Heart right ventricle (tissue), 16 donors: ENCODE measurements at regions of chr12 and their contacts with region 1.

Region 1: DNA sequence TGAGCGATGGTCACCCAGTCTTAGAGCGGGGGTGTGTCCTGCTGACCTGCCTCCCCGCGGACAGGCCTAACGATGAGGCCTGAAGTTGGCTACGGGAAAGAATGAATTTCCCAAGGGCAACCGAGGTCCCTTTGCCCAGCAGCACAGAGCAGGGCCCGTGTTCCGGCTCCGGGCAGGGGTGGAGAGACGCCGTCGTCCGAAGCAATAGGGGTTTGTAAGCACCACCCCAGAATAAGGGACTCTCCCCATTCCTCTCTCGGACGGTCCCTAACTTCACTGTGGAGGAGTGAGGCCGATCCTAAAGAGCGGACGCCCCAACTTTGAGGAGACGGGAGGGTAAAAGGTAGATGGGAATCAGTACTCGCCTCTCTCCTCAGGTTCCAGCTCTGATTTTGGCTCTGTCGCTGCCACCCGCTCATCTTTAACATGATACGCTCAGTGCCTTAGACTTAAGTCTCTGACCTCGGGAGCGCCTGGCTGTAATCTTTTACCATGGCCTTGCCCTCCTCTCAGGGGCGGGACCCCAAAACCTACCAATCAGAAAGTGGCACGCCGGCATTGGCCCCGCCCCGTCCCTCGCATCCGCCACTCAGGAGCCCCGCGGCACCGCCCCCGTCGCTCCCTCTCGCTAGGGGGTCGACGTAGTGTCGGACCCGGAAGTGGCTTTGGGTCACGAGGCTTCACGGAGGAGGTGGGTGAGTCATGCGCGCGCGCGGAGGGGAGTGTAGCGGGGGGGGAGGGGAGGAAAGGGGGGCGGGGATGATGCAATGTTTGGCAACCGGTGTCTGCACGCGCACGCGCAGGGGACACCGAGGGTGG is at the start of gene DDIT3:
- DNase-seq: peak; percentile 99
- ATAC-seq: peak; percentile 82 to 92 (median 90)
- H3K4me3 ChIP-seq: peak within 1 kb of the TSS; percentile 67 to 98 (median 88)
- H3K27ac ChIP-seq: peak within 1 kb of the TSS; percentile 89 to 100 (median 98)
- H3K4me1 ChIP-seq: peaks cover 25 to 80% (median 68%) of the 10 kb centered on the region in 9 donors
- H3K27me3 ChIP-seq: no peaks in the 10 kb centered on the region
- CTCF ChIP-seq: no peak
- total RNA-seq, gene DDIT3: 11.2 to 34.1 (median 22.0) TPM

Region 2: GRCh38 chr12:57280211-57281062 is 239.8 kb before region 1 on chr12:
- intact Hi-C with region 1: loop called in 1 of 10 experiments (anchors 5 kb)
- DNase-seq: no peak
- ATAC-seq: peak in 5 of 8 donors; percentile 34 to 63 (median 44)
- H3K4me3 ChIP-seq: no peak overlapping the region
- H3K27ac ChIP-seq: peak overlapping the region in 1 of 10 donors; percentile 67
- H3K4me1 ChIP-seq: peaks cover 0 to 14% (median 0%) of the 10 kb centered on the region in 9 donors
- H3K27me3 ChIP-seq: no peaks in the 10 kb centered on the region
- CTCF ChIP-seq: no peak

Region 3: GRCh38 chr12:57430112-57430930 is 89.9 kb before region 1 on chr12:
- intact Hi-C with region 1: no loop called
- DNase-seq: peak; percentile 48 to 55
- ATAC-seq: peak; percentile 64 to 86 (median 74)
- H3K4me3 ChIP-seq: peak overlapping the region; percentile 42 to 80 (median 66)
- H3K27ac ChIP-seq: peak overlapping the region; percentile 85 to 98 (median 94)
- H3K4me1 ChIP-seq: peaks cover 0 to 24% (median 15%) of the 10 kb centered on the region in 9 donors
- H3K27me3 ChIP-seq: no peaks in the 10 kb centered on the region
- CTCF ChIP-seq: peak in 5 of 9 donors; percentile 15 to 40 (median 34)

Region 4: GRCh38 chr12:57487597-57488401 is 32.5 kb before region 1 on chr12 and contains the start of gene MARS1:
- intact Hi-C with region 1: loop called in 2 of 10 experiments (anchors 1 to 2 kb)
- DNase-seq: peak; percentile 90 to 95
- ATAC-seq: peak; percentile 95 to 99 (median 99)
- H3K4me3 ChIP-seq: peak within 1 kb of the TSS; percentile 67 to 96 (median 84)
- H3K27ac ChIP-seq: peak within 1 kb of the TSS in 9 of 10 donors; percentile 36 to 90 (median 73)
- H3K4me1 ChIP-seq: peaks cover 9 to 21% (median 13%) of the 10 kb centered on the region in 9 donors
- H3K27me3 ChIP-seq: no peaks in the 10 kb centered on the region
- CTCF ChIP-seq: peak in 2 of 9 donors; percentile 11 to 26
- total RNA-seq, gene MARS1: 56.7 to 105 (median 72.5) TPM

Region 5: GRCh38 chr12:57546438-57547383 is 26.4 kb after region 1 on chr12 and contains the start of gene DCTN2:
- intact Hi-C with region 1: loop called in 2 of 10 experiments (anchors 2 kb)
- DNase-seq: peak; percentile 93 to 98
- ATAC-seq: peak; percentile 97 to 100 (median 99)
- H3K4me3 ChIP-seq: peak within 1 kb of the TSS; percentile 86 to 99 (median 96)
- H3K27ac ChIP-seq: peak within 1 kb of the TSS; percentile 46 to 95 (median 88)
- H3K4me1 ChIP-seq: peaks cover 13 to 45% (median 37%) of the 10 kb centered on the region in 9 donors
- H3K27me3 ChIP-seq: peaks cover 0 to 36% (median 34%) of the 10 kb centered on the region in 7 donors
- CTCF ChIP-seq: peak in 3 of 9 donors; percentile 6 to 23 (median 12)
- total RNA-seq, gene DCTN2: 82.9 to 116 (median 101) TPM

Region 6: DNA sequence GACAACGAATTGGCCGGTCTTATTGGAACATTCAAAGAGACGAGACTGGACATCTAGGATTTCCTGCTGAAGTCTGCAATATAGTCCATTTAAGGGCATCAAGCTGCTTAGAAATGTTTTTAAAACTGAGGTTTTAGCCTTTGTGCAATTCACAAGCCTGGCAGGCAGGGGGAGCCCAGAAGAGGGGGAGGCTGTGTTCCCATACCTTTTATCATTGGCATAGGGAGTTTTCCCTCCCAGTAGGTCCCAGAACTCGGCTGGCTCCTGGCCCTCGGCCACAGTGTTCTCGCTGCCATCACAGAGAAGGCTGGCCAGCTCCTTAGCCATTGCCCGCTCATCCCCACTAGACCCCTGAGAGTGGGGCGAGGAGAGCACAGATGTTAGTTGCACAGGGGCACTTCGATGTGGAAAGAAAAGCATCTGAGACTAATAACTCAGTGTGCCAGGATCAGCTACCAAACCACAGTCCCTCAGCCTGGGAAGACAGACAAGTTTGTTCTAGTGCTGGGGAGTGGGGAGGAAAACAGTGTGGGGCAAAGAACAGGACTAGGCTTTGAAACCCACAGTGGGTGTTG is 283.1 kb after region 1 on chr12:
- intact Hi-C with region 1: no loop called
- DNase-seq: peak; percentile 48 to 55
- ATAC-seq: peak; percentile 70 to 87 (median 80)
- H3K4me3 ChIP-seq: no peak overlapping the region
- H3K27ac ChIP-seq: peak overlapping the region in 5 of 10 donors; percentile 10 to 34 (median 17)
- H3K4me1 ChIP-seq: peaks cover 0 to 8% (median 5%) of the 10 kb centered on the region in 9 donors
- H3K27me3 ChIP-seq: no peaks in the 10 kb centered on the region
- CTCF ChIP-seq: peak; percentile 65 to 86 (median 79)

Region 7: DNA sequence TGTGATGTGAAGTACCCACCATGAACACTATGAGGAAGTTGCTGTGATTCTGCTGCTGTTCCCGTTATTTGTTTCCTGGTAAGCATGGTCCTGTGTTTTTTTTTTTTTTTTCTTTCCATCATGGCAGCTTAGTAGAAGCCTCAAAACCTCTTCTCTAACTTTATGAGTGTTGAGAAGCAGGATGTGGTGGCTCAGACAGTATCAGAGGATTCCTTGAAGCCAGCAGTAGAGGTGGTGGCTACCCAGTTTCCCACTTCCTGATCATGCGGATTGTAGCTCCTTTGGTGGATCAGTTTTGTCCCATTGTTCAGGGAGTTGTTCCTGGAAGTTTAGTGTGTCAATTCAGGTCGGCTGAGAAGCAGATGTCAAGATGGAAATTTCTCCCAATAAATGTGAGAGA is 596.9 kb after region 1 on chr12:
- intact Hi-C with region 1: no loop called
- DNase-seq: no peak
- ATAC-seq: no peak
- H3K4me3 ChIP-seq: no peak overlapping the region
- H3K27ac ChIP-seq: no peak overlapping the region
- H3K4me1 ChIP-seq: no peaks in the 10 kb centered on the region
- H3K27me3 ChIP-seq: no peaks in the 10 kb centered on the region
- CTCF ChIP-seq: no peak